GM12878 (cell line): ENCODE measurements at regions of chr5 and their contacts with region 1.

Region 1: DNA sequence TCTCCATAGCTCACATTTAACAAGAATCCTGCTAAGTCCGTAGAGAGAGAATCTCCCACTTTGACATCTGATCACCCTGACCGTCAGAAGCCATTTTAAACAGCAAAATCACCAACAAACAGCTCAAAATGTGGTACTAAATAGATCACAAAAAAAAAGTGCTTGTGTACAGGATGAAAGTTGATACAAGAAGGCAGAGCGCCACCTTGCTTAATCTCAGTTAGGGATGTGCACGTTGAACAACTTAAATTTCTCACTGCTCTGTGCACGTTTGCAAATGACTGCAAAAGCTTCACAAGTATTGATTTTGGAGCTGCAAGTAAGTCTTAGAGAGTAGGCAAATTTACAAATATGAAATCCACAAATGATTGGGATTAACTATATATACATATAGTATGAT is 63.1 kb upstream of the NREP start:
- DNase-seq: no peak
- ATAC-seq: no peak
- H3K4me3 ChIP-seq: no peak overlapping the region
- H3K27ac ChIP-seq: no peak overlapping the region
- H3K4me1 ChIP-seq: no peaks in the 10 kb centered on the region
- H3K27me3 ChIP-seq: no peaks in the 10 kb centered on the region
- CTCF ChIP-seq: 0 out of 6 replicates have a peak, but pooled peaks of 1 of the 3 experiments have one; percentile 4
- EP300 ChIP-seq: no peak
- POLR2A ChIP-seq: no peak
- RAD21 ChIP-seq: no peak

Region 2: DNA sequence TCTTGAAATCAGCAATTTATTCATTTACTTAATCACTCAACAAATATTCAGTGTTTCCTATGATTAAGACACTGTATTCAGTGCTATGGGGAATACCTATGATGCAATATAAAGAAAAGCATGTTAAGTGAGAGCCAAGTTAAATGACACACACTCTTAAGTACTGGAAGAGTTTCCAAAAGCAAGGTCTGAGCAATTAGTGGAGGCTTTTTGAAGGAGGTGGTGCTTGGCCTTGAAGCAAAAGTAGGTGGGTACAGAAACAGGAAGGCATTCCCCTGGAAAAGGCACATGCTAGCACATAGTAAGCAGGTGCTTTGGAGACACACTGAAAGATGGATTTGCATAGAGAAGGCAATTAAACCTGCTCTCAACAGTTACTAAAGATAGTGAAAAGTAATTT is 744.6 kb before region 1 on chr5:
- CTCF ChIA-PET with region 1: no interaction called
- POLR2A ChIA-PET with region 1: no interaction called
- RAD21 ChIA-PET with region 1: no interaction called
- SMC1A ChIA-PET with region 1: no interaction called
- in situ Hi-C with region 1: no loop called
- intact Hi-C with region 1: no loop called
- DNase-seq: no peak
- ATAC-seq: peak; percentile 37
- H3K4me3 ChIP-seq: no peak overlapping the region
- H3K27ac ChIP-seq: no peak overlapping the region
- H3K4me1 ChIP-seq: no peaks in the 10 kb centered on the region; the same call in 1 of the 2 replicates
- H3K27me3 ChIP-seq: peaks cover 5 to 27% of the 10 kb centered on the region in 2 experiments
- CTCF ChIP-seq: no peak
- EP300 ChIP-seq: no peak
- POLR2A ChIP-seq: no peak
- RAD21 ChIP-seq: no peak

Region 3: DNA sequence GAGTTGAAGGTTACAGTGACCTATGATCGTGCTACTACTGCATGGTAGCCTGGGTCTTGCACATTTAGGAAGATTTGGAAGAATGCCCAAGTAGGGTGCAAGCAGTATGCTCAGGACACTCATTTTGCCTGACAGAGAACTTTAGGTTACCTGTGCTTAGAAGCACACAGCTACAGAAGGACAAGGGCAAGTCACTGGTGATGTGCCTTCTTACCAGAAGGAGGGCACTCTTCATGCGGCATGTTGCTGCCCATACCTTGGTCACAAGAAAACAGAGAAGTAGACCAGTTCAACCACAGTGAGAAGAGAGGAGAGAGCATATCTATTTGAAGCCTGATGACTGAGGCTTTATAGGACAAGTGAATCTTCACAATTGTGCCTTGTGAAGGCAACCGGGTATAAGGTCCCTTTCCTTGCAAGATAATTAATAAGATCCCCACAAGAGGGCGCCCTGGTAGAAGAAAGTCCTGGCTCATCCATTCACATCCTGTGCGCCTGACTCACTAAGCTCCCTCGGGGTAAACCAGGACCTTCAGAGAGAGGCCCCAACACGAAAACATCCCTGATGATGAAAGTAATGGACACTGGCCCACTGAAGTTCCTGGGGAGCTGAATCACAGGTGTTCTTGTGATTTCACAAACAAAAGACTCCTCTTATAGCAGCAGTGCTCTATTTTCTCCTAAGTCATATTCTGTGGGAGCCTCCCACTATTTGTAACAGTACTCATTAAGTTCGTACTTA is 269.6 kb before region 1 on chr5:
- CTCF ChIA-PET with region 1: interaction called, 28 read pairs
- POLR2A ChIA-PET with region 1: no interaction called
- RAD21 ChIA-PET with region 1: interaction called, 27 read pairs
- SMC1A ChIA-PET with region 1: interaction called, 20 read pairs
- in situ Hi-C with region 1: no loop called
- intact Hi-C with region 1: no loop called
- DNase-seq: peak; percentile 50
- ATAC-seq: peak; percentile 99
- H3K4me3 ChIP-seq: no peak overlapping the region
- H3K27ac ChIP-seq: no peak overlapping the region
- H3K4me1 ChIP-seq: no peaks in the 10 kb centered on the region
- H3K27me3 ChIP-seq: no peaks in the 10 kb centered on the region
- CTCF ChIP-seq: peak; percentile 50 to 76 (median 56)
- EP300 ChIP-seq: no peak
- POLR2A ChIP-seq: no peak
- RAD21 ChIP-seq: peak; percentile 91

Region 4: DNA sequence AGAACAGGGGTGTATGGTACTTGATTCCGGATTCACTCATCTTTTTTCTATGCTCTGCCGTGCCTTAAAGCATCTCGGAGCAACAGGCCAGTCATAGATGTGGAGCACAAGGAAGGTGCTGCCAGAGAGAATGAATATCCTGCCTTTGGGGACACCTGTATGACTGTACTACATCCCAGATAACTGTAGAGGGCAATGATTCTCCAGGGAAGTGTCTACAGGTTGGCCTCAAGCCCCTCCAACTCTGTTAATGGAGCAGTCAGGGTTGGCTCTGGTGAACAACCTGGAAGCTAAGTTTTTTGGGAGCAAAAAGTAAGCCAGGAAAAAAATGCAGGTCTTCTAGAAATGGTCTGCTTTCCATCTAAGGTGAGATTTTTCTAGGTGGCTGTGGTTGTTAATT is 134.1 kb before region 1 on chr5:
- CTCF ChIA-PET with region 1: interaction called, 6 read pairs
- POLR2A ChIA-PET with region 1: no interaction called
- RAD21 ChIA-PET with region 1: no interaction called
- SMC1A ChIA-PET with region 1: interaction called, 12 read pairs
- in situ Hi-C with region 1: no loop called
- intact Hi-C with region 1: no loop called
- DNase-seq: no peak
- ATAC-seq: peak; percentile 52
- H3K4me3 ChIP-seq: no peak overlapping the region
- H3K27ac ChIP-seq: no peak overlapping the region
- H3K4me1 ChIP-seq: no peaks in the 10 kb centered on the region
- H3K27me3 ChIP-seq: no peaks in the 10 kb centered on the region
- CTCF ChIP-seq: peak in 2 of 3 experiments; percentile 5 to 16; a peak in 1 of 6 replicates
- EP300 ChIP-seq: no peak
- POLR2A ChIP-seq: no peak
- RAD21 ChIP-seq: peak; percentile 37; the same call in 1 of the 2 replicates

Region 5: GRCh38 chr5:111853748-111854147 is 33.7 kb after region 1 on chr5:
- CTCF ChIA-PET with region 1: interaction called, 16 read pairs
- POLR2A ChIA-PET with region 1: no interaction called
- RAD21 ChIA-PET with region 1: interaction called, 8 read pairs
- SMC1A ChIA-PET with region 1: interaction called, 4 read pairs
- in situ Hi-C with region 1: no loop called
- intact Hi-C with region 1: no loop called
- DNase-seq: peak; percentile 41
- ATAC-seq: peak; percentile 88
- H3K4me3 ChIP-seq: no peak overlapping the region
- H3K27ac ChIP-seq: no peak overlapping the region
- H3K4me1 ChIP-seq: no peaks in the 10 kb centered on the region
- H3K27me3 ChIP-seq: no peaks in the 10 kb centered on the region
- CTCF ChIP-seq: no peak
- EP300 ChIP-seq: no peak
- POLR2A ChIP-seq: no peak
- RAD21 ChIP-seq: no peak